ENCODE measurements at regions of chr9 and their contacts with region 1.

Region 1: GRCh38 chr9:94056442-94056974 is 27.8 kb upstream of the PTPDC1 start:
- H3K4me3 ChIP-seq: no peak overlapping the region
- H3K27ac ChIP-seq: no peak overlapping the region
- H3K4me1 ChIP-seq: no peaks in the 10 kb centered on the region
- CTCF ChIP-seq: no peak

Region 2: GRCh38 chr9:94213511-94214124 is 157.1 kb after region 1 on chr9:
- CTCF ChIA-PET with region 1: interaction called, 17 read pairs
- POLR2A ChIA-PET with region 1: no interaction called
- H3K4me3 ChIP-seq: no peak overlapping the region
- H3K27ac ChIP-seq: no peak overlapping the region
- H3K4me1 ChIP-seq: no peaks in the 10 kb centered on the region
- CTCF ChIP-seq: peak; percentile 39

Measured in HEK293 (cell line).